Dendritic cell treated with granulocyte-macrophage colony-stimulating factor and Interleukin-4, amounts not matched to agents 40 ng/mL and 50 ng/mL, for 4 days (primary cell): ENCODE measurements at regions of chr15 and their contacts with region 1.

Region 1: DNA sequence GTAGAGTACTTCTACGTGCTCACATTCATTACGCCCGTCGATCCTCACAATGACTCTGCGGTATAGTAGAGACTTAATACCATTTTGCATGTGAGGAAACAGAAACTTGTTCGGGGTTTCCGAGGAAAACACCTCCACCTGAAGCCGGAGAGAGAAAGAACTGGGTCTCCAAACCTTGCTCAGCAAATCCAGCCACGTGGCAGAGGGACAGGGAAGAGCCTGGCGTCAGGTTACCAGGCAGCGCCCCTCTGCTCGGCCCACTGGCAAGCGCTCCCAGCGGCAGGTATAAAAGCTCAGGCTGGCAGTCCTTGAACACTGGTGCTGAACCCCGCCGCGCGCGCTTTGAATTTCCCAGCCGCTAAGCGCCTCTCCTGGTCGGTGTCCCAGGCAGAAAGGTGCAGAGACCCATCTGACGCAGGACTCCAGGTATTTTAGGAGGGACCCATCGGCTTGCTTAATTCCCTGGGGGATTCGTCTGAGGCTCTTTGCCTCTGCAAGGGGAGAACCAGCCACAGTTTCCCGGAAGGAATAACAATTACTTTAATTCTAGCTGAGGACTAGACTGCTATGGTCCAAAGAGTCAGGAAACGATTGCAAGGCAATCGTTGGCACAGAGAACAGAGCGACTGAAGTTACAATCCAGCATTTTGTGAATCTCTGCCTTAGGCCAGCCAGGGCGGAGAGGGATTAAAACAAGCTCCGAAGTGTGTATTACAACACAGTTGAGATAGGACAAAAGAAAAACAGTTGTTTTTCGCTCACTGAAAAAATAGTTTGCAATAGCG is at the start of gene C2CD4A:
- H3K4me3 Mint-ChIP-seq: peak within 1 kb of the TSS; percentile 69
- H3K27ac Mint-ChIP-seq: no peak within 1 kb of the TSS
- H3K4me1 Mint-ChIP-seq: peaks cover 24% of the 10 kb centered on the region
- H3K27me3 Mint-ChIP-seq: peaks cover 52% of the 10 kb centered on the region

Region 2: DNA sequence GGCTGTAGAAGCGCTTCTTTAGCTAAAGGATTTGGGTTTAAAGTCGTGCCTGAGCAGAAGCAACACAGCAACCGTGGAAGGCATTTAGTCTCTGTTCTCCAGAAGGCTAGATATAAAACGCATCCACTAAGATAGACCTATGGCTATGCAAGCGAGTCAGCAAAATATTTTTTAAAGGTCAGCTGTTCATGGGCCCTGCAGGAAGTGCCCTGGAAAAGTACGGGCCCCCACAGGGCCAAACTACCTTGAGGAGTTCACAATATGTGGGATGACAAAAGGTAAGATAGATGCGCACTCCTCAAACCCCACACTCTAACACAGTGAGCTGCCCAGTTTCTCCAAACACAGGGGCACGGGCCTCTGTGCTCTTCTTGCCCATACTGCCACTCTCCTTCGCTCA is 268.2 kb before region 1 on chr15:
- intact Hi-C with region 1: no loop called
- H3K4me3 Mint-ChIP-seq: no peak overlapping the region
- H3K27ac Mint-ChIP-seq: no peak overlapping the region
- H3K4me1 Mint-ChIP-seq: no peaks in the 10 kb centered on the region
- H3K27me3 Mint-ChIP-seq: no peaks in the 10 kb centered on the region

Region 3: DNA sequence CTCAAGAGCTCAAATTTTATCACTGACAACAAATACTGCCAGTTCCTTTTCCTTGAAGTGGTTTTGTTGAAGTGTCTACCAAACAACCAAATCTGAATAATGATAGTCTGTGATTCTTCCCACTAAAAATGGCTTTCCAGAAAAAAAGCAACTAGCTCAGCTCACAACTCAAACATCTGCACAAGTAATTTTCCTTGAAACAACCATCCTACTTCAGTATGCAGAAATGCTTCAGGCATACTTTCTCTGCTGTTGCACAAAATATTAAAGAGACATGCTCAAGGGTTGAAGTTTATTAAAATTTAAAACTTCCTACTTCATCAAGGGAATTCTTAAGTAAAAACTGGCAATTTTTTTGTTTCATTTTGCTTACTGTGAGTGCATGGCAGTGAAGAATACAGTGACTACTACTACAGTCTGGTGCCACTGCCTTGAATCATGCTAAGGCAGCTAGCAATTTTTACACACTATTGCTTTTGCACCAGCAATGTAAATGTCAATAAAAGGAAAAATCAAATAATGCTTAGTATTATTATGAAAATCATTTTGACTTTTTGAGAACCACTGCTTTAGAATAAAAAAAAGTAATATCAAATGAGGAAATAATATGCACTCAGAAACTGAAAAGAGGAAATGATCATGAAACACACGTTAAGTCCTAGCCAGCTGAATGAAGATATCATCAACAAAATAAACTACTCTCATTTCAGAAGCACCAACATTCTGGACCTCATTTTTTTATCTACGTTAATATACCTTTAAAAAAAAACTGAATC is 40.2 kb before region 1 on chr15:
- intact Hi-C with region 1: loop called (anchors 5 kb)
- H3K4me3 Mint-ChIP-seq: no peak overlapping the region
- H3K27ac Mint-ChIP-seq: peak overlapping the region; percentile 27
- H3K4me1 Mint-ChIP-seq: peaks cover 9% of the 10 kb centered on the region
- H3K27me3 Mint-ChIP-seq: no peaks in the 10 kb centered on the region

Region 4: DNA sequence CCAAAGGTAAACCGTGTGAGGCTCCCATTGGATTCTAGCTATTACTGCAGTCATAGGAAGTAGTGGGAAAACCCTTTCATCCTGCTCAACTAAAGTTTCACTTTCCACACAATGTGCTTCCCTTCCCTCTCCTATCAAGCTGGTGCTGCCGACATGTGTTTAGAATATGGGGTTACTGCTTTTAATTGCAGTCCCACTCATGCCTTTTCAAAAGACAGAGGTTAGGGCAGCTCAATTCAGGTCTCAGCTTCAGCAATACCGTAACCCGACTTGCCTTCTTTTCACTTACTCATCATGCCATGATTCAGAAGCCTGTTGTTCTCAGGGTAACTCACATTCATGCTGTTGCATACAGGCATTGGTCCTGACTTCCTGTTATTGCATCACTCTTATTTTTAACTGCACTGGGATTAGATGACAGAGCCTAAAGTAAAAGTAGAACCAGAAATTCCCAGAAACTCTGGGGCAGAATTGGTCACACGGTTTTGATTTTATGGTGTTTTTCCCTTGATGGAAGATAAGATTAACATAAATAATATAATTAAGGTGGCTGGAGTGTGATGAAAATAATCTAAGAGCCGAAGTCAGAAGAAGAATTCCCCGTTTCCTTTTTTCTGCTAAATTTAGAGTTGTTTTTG is 52.5 kb after region 1 on chr15:
- intact Hi-C with region 1: no loop called
- H3K4me3 Mint-ChIP-seq: peak overlapping the region; percentile 52
- H3K27ac Mint-ChIP-seq: peak overlapping the region; percentile 30
- H3K4me1 Mint-ChIP-seq: peaks cover 25% of the 10 kb centered on the region
- H3K27me3 Mint-ChIP-seq: no peaks in the 10 kb centered on the region